ENCODE measurements at regions of chr13 and their contacts with region 1.

Region 1: DNA sequence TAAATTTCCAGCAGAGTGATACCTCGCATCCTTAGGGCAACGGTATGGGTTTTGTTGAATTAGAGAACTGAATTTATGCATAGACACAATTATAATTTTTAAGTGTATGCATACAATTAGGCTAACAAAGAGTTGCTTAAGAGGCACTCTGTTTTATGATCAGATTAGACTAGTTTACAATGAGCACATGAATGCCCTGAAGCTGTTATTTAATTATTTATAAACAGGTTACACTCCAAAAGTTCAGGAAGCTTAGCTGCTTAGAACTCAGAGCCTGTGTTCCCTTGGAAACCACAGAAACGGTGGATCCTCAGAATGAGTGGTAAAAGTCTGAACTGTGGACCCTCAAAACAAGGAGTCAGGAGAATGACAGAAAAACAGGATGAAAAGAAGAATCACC is 72.5 kb upstream of the FBXL3 start:
- DNase-seq: no peak
- H3K4me3 Mint-ChIP-seq: no peak overlapping the region
- H3K27ac Mint-ChIP-seq: no peak overlapping the region
- H3K4me1 Mint-ChIP-seq: no peaks in the 10 kb centered on the region
- H3K27me3 Mint-ChIP-seq: no peaks in the 10 kb centered on the region

Region 2: DNA sequence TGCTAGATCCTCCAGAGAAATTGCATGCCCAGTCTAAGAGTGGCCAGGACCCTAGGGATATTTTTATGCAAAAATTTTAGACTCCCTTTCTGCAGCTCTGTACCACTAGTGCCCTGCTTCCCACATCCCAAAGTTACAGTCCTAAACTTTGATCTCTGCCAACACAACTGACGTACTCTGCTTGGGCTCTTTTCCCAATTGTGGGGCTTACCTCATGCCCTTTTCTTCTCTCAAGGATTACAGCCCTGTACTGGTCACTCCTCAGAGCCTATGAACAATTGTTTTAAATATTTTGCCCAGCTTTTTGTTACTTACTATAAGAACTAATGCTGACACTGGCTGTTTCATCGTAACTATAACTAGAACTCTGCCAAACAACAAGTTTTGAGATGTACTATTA is 14.7 kb before region 1 on chr13:
- intact Hi-C with region 1: loop called (anchors 2 kb)
- DNase-seq: no peak
- H3K4me3 Mint-ChIP-seq: no peak overlapping the region
- H3K27ac Mint-ChIP-seq: no peak overlapping the region
- H3K4me1 Mint-ChIP-seq: peaks cover 6% of the 10 kb centered on the region
- H3K27me3 Mint-ChIP-seq: no peaks in the 10 kb centered on the region

Measured in activated T-helper 1 cell treated with anti-CD3 and anti-CD28 coated beads, Interleukin-12 subunit alpha, Interleukin-12 subunit beta, Interleukin-2, Interleukin-4 antibody, amounts not matched to agents 30 ng/mL and 10 ng/mL and 1 ng/mL, durations not matched to agents 14 hours and 24 hours and 36 hours (primary cell).